ENCODE measurements at regions of chr3 and their contacts with region 1.

Region 1: DNA sequence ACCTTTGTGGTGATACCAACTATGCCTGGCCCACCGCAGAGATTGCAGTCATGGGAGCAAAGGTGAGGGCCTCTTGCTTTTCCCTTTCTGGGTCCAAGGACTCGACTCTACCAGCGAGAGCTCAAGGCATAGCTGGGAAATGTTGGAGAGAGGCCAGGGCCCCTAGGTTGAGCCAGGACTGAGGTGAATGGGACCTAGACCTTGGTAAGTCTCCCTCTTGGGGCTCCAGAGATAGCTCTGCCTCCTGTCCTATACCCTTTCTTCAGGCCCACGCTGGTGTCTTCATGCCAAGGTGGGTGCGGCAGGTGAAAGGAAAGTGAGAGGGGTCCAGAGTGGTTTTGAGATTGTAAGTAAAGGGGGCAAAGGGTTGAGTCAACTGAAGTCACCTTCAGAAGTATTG is 77.5 kb downstream of the PCCB start:
- DNase-seq: no peak
- ATAC-seq: no peak
- H3K4me3 Mint-ChIP-seq: no peak overlapping the region
- H3K27ac Mint-ChIP-seq: no peak overlapping the region
- H3K4me1 Mint-ChIP-seq: no peaks in the 10 kb centered on the region
- H3K27me3 Mint-ChIP-seq: no peaks in the 10 kb centered on the region
- CTCF ChIP-seq: no peak

Region 2: DNA sequence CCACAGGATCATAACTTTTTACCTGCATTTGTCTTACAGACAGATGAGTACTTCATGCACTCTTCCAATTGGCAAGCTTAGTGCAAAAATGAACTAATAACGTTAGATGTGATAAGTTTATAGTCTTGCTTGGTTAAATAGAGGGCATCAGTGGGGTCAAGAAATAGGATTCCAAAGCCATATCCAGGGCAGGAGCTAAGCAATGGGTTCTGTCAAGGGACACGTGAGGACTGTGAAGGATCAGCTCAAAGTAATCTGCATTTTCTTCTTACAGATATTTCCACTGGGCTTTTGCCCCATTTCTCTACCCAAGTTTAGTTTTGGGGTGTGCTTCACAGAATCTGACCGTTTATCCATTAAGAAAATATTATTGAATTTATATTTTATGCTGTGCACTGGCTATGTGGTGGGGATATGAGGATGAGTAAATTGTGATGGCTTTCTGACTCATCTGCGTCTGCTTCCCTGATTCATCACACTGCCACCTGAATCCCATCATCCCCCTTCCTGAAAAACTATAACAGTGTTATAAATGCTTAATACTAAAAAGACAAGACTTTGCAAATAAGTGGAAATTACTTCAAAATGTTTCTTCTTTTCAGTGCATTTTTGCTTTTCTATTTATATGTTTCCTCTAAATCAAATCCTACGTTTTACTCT is 344.6 kb before region 1 on chr3:
- CTCF ChIA-PET with region 1: no interaction called
- POLR2A ChIA-PET with region 1: no interaction called
- intact Hi-C with region 1: no loop called
- DNase-seq: no peak
- ATAC-seq: no peak
- H3K4me3 Mint-ChIP-seq: no peak overlapping the region
- H3K27ac Mint-ChIP-seq: no peak overlapping the region
- H3K4me1 Mint-ChIP-seq: no peaks in the 10 kb centered on the region
- H3K27me3 Mint-ChIP-seq: peaks cover 6% of the 10 kb centered on the region
- CTCF ChIP-seq: no peak

Region 3: GRCh38 chr3:136232413-136232812 is 95.3 kb before region 1 on chr3:
- CTCF ChIA-PET with region 1: no interaction called
- POLR2A ChIA-PET with region 1: no interaction called
- intact Hi-C with region 1: no loop called
- DNase-seq: no peak
- ATAC-seq: no peak
- H3K4me3 Mint-ChIP-seq: no peak overlapping the region
- H3K27ac Mint-ChIP-seq: no peak overlapping the region
- H3K4me1 Mint-ChIP-seq: no peaks in the 10 kb centered on the region
- H3K27me3 Mint-ChIP-seq: no peaks in the 10 kb centered on the region
- CTCF ChIP-seq: no peak

Region 4: DNA sequence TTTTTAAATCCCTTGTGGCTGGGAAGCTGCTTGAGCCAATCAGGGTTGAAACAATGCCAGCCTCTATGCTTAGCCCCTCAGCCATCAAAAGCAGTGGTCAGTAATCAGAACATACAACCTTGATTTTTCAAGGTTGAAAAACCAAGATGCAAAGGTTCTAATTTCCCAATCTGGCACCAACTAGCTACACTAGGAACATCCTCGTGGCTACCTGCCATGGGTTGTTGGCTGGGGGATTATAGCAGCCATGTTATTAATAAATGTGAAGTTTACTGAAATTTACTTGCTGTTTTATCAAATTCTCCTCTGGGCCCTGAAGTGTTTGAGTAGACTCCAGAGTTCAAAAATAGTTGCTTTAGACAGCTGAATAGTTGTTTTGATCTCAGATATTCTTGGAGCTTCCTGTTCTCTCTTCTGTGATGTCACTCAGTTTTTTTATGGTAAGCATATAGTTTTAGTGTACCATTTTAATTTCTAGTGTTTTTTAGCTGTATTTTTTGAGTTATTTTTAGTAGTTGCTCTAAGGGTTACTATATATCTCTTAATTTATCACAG is 45.6 kb before region 1 on chr3:
- CTCF ChIA-PET with region 1: no interaction called
- POLR2A ChIA-PET with region 1: no interaction called
- intact Hi-C with region 1: no loop called
- DNase-seq: no peak
- ATAC-seq: no peak
- H3K4me3 Mint-ChIP-seq: no peak overlapping the region
- H3K27ac Mint-ChIP-seq: peak overlapping the region; percentile 46
- H3K4me1 Mint-ChIP-seq: peaks cover 25% of the 10 kb centered on the region
- H3K27me3 Mint-ChIP-seq: no peaks in the 10 kb centered on the region
- CTCF ChIP-seq: no peak

Region 5: DNA sequence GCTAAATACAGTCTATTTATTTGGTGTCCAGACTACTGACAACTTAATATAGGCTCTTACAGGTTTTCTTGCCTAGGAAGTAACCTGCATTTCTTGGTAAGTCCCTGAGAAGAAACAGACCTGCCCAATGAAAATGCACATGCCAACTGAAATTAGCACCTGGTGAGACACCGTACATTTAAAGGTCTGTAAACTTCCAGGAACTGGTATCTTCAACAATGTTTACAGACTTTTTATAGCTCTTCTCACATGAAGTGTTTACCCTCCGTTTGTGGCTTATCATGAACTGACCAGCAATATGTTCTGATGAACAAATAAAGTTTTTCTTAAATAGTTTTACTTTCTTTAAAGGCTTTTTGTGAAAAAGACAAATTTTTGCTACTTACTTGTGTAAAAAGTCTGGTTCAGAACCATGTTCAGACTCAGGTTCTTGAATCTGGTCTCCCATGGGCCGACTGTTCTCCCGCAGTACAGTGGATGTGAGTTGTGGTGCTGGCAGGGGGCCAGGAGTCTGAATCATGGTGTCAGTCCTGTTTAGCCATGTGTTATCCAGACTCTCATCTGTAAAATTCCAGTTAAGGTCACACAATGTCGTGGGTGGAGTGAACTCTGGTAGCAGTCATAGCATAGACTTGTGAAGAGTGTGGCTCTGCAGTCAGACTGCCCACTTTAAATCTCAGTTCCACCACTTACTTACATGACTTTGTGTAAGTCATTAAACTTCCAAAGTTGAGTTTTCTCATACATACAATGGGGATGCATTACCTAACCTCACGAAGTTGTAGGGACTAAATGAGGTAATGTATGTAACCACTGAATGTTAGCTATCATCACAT is 16.0 kb after region 1 on chr3:
- CTCF ChIA-PET with region 1: no interaction called
- POLR2A ChIA-PET with region 1: no interaction called
- intact Hi-C with region 1: loop called (anchors 1 kb)
- DNase-seq: no peak
- ATAC-seq: no peak
- H3K4me3 Mint-ChIP-seq: no peak overlapping the region
- H3K27ac Mint-ChIP-seq: no peak overlapping the region
- H3K4me1 Mint-ChIP-seq: no peaks in the 10 kb centered on the region
- H3K27me3 Mint-ChIP-seq: no peaks in the 10 kb centered on the region
- CTCF ChIP-seq: no peak

Measured in activated B cell treated with CpG ODN at 0.5 μM for 24 hours (primary cell).